Motor neuron (in vitro differentiated cells): ENCODE measurements at regions of chr17 and their contacts with region 1.

Region 1: GRCh38 chr17:77494664-77495435 is 354.1 kb downstream of the SEC14L1 start:
- ATAC-seq: peak; percentile 65 to 87 (median 71)
- H3K4me3 ChIP-seq: no peak overlapping the region
- H3K27ac ChIP-seq: no peak overlapping the region
- H3K4me1 ChIP-seq: peaks cover 0 to 2% of the 10 kb centered on the region in 2 donors

Region 2: DNA sequence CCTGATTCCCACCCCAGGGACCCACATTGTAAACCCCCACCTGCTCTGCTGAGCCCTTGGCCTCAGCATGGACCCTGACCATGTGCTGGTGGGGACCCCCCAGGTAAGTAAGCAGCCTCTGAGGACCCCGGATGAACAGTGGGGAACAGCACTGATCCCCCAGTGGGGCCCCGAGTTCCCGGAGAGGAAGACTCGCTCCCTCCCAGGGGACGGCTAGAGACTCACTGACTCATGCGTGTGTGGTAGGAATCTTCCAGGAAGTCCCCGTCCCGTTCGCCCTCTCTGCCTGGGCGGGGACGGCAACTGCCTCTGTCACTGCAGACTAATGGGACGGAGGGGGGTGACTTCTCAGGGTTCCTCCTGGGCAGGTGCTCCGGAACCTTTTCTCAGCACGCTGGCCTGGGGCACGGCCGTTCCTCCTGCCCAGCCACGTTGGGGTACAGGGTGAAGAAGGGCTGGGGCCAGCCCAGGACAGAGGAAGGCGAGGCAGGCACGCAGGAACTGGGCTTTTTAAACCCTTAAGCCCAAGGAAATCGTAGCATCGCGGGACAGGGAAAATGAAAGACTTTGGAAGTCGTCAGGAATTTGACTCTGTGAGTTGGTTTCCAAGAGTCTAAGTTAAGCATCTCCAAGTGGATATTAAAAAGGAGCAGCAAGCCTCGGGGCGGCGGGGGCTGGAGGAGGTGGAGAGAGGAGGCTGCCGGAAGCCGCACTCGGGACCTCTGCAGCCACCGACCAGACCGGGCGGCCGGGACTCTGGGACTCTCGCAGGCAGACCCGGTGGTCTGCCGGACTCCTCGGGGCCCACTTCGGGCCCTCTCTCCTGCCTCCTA is 175.4 kb before region 1 on chr17:
- in situ Hi-C with region 1: loop called in 1 of 9 experiments (anchors 10 kb)
- ATAC-seq: peak; percentile 40 to 72 (median 50)
- H3K4me3 ChIP-seq: peak overlapping the region in 1 of 5 donors; percentile 28
- H3K27ac ChIP-seq: no peak overlapping the region
- H3K4me1 ChIP-seq: peaks cover 31 to 42% of the 10 kb centered on the region in 2 donors

Region 3: GRCh38 chr17:77331301-77331864 is 163.5 kb before region 1 on chr17:
- in situ Hi-C with region 1: loop called in 8 of 9 experiments (anchors 10 to 25 kb)
- ATAC-seq: peak; percentile 73 to 98 (median 86)
- H3K4me3 ChIP-seq: peak overlapping the region in 1 of 5 donors; percentile 10
- H3K27ac ChIP-seq: no peak overlapping the region
- H3K4me1 ChIP-seq: peaks cover 0 to 6% of the 10 kb centered on the region in 2 donors